ENCODE measurements at regions of chr10 and their contacts with region 1.

Region 1: DNA sequence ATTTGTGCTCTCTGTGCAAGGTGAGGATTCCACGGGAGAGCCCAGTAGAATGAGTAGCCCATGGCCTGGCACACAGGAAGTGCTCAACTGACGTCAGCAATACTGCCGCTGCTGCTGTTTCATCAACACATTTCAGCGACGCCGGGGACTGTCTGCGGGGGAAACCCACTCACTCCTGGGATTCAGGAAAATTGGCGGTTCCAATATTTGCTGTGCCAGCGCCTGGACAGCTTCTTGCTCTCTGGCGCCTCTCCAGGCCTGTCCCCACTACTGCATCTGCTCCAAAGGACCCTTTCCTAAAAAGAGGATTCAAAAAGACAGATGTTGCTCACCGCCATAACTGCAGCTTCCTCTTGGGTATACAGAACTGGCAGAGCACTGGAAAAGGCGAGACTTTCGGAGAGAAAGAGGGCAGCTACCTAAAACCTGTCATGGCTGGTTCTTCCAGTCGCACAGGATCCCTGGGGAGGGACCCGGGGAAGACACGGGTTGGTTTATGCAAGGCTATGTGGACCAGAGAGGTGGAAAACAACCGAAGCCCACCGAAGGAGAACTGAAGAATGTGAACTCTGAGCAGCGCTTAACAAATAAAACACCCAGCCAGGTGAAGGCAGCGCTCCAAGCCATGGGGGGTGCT is 39.7 kb upstream of the ENO4 start:
- DNase-seq: peak in 1 of 2 donors; percentile 43
- ATAC-seq: peak; percentile 67

Region 2: GRCh38 chr10:116690356-116691322 is 119.0 kb before region 1 on chr10:
- intact Hi-C with region 1: no loop called
- DNase-seq: peak in 1 of 2 donors; percentile 35
- ATAC-seq: peak; percentile 38

Region 3: GRCh38 chr10:116947842-116948529 is 138.4 kb after region 1 on chr10:
- intact Hi-C with region 1: no loop called
- DNase-seq: no peak
- ATAC-seq: no peak

Region 4: DNA sequence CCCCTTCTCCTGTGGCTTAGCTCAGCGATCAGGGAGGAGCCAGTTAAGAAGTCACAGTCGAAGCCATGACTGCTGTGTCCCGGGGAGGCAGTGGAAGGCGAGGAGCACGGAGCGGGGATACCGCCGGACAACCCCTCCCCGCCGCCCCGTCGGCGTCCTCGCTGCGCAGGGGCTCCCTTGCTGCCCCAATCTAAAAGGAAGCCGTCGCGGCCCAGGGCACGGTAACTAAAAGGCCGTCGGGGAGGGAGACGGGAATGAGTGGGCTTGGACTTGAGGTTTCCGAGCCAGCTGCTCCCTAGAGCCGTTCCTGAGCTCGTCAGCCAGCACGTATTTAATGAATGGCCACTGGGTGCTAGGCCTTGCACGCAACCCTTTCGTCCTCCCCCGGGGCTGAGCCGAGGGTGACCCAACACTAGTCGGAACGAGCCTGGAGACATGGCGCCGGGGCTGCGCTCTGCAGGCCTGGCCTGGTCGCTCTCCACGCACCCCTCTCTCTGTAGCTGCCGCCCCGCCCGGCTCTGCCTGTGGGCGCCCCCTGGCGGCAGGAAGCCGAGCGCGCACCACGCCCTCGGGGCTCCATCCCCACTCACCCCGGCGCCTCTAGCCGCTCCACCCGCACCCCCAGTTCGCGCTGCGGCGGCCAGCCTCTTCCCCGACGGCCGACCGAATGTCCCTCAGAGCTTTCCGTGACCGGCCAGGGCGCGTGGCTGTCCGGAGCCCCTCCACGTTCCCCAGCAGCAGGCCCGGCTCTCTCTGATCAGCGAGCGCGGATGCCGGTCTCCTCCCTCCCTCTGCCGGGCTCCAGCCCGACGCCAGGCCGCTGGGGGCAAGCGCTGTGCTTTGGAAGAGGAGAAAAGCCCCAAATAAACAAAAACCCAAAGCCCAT is 358.4 kb after region 1 on chr10:
- intact Hi-C with region 1: loop called in 1 of 2 experiments (anchors 10 kb)
- DNase-seq: peak in 1 of 2 donors; percentile 71
- ATAC-seq: peak; percentile 91